Activated T-helper 1 cell treated with anti-CD3 and anti-CD28 coated beads, Interleukin-12 subunit alpha, Interleukin-12 subunit beta, Interleukin-2, Interleukin-4 antibody, amounts not matched to agents 30 ng/mL and 10 ng/mL and 1 ng/mL, durations not matched to agents 14 hours and 24 hours and 36 hours (primary cell): ENCODE measurements at regions of chr1 and their contacts with region 1.

Region 1: GRCh38 chr1:248858891-248859889 is at the start of gene ZNF692:
- DNase-seq: peak; percentile 97
- H3K4me3 Mint-ChIP-seq: peak within 1 kb of the TSS; percentile 96
- H3K27ac Mint-ChIP-seq: peak within 1 kb of the TSS; percentile 97
- H3K4me1 Mint-ChIP-seq: peaks cover 37% of the 10 kb centered on the region
- H3K27me3 Mint-ChIP-seq: no peaks in the 10 kb centered on the region
- total RNA-seq, gene ZNF692: 89.6 and 91.0 TPM in 2 replicates

Region 2: DNA sequence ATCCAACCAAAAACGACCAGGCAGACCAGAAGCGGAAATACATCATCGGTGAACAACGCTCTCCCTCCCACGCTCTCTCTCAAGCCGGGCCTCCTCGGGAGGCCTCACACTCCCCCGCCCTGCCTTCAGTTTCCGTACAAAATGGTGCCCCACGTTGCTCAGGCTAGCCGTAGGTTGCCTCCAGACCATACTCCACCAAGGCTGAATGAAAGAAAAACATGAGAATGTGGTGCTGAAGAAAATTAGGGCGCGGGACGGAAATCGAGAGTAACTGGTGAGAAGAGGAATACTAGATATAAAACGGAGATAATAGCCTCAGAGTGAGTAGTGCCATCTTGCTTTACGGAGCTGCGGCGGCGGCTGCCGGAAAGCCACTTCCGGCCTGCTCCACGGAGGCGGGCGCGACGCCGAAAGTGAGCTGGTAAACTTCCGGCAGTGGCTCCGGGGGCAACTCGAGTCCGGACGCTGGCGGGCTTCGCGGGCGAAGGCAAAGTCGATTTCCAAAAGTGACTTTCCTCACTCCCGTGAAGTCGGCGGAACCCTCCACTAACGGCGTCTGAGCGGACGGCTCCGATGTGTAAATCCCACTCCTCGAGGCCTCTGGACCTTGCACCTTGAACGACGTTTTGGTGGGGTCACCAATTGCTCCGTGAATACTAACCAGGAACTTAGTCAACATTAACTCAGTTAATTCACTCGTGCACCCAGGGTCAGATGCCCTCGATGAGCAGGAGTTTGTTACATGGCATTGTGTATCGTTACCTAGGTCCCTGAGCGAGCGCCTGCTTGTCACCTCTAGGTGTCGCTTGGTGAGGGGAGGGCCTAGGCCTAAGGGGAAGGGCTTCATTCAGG is 33.1 kb before region 1 on chr1 and contains the start of gene SH3BP5L:
- intact Hi-C with region 1: loop called (anchors 1 kb)
- DNase-seq: peak; percentile 84
- H3K4me3 Mint-ChIP-seq: peak within 1 kb of the TSS; percentile 91
- H3K27ac Mint-ChIP-seq: peak within 1 kb of the TSS; percentile 100
- H3K4me1 Mint-ChIP-seq: peaks cover 44% of the 10 kb centered on the region
- H3K27me3 Mint-ChIP-seq: peaks cover 2% of the 10 kb centered on the region
- total RNA-seq, gene SH3BP5L: 29.0 and 30.9 TPM in 2 replicates

Region 3: DNA sequence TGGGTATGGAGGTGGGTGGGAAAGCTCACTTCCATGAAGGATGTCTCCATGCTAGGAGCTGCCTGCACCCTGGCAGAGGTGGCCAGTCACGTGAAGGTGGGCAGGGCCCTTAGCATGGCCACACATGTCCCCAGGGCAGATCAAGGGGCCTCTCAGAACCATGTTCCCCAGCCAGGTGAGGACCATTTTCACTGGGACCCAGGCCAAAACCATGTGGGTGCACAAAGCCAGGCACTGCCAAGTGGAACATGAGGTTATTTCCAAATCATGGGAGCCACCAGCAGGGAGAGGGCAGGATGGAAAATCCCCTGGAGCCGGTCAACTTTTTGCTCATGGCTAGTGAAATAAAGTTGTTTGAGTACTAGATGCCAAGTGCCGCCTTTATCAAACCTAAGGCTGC is 10.0 kb before region 1 on chr1:
- intact Hi-C with region 1: no loop called
- DNase-seq: no peak
- H3K4me3 Mint-ChIP-seq: no peak overlapping the region
- H3K27ac Mint-ChIP-seq: peak overlapping the region; percentile 50
- H3K4me1 Mint-ChIP-seq: no peaks in the 10 kb centered on the region
- H3K27me3 Mint-ChIP-seq: no peaks in the 10 kb centered on the region